ENCODE measurements at regions of chr4 and their contacts with region 1.

Region 1: DNA sequence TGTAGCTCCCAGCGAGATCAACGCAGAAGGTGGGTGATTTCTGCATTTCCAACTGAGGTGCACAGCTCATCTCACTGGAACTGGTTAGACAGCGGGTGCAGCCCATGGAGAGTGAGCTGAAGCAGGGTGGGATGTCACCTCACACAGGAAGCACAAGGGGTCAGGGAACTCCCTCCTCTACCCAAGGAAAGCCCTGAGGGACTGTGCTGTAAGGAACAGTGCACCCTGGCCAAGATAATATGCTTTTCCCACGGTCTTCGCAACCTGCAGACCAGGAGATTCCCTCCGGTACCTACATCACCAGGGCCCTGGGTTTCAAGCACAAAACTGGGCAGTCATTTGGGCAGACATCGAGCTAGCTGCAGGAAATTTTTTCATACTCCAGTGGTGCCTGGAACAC is 216.4 kb upstream of the TET2 start:
- DNase-seq: no peak
- H3K4me3 ChIP-seq: no peak overlapping the region
- H3K27ac ChIP-seq: no peak overlapping the region
- H3K4me1 ChIP-seq: no peaks in the 10 kb centered on the region
- H3K27me3 ChIP-seq: no peaks in the 10 kb centered on the region
- CTCF ChIP-seq: no peak

Region 2: DNA sequence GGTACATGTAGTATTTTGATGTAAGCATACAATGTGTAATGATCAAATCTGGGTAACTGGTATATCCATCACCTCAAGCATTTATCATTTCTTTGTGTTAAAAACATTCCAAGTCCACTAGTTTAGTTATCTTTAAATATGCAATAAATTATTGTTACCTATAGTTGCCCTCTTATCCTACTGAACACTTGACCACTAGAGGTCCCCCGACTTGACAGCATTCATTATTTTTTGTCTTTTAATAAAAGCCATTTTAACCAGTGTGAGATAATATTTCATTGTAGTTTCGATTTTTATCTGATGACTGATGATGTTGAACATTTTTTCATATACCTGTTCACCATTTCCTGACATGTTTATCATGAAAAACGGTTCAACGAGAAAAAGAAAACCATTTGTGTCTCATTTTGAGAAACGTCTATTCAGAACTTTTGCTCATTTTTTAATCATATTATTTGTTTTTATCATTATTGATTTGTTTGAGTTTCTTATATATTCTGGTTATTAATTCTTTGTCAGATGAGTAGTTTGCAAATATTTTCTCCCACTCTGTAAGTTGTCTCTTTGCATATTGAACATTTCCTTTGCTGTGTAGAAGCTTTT is 236.6 kb before region 1 on chr4:
- CTCF ChIA-PET with region 1: no interaction called
- dilution Hi-C with region 1: no loop called
- in situ Hi-C with region 1: no loop called
- intact Hi-C with region 1: no loop called
- DNase-seq: peak; percentile 21
- H3K4me3 ChIP-seq: no peak overlapping the region
- H3K27ac ChIP-seq: no peak overlapping the region
- H3K4me1 ChIP-seq: no peaks in the 10 kb centered on the region
- H3K27me3 ChIP-seq: no peaks in the 10 kb centered on the region
- CTCF ChIP-seq: peak; percentile 52 to 69

Region 3: GRCh38 chr4:105153749-105154148 is 223.5 kb after region 1 on chr4:
- CTCF ChIA-PET with region 1: no interaction called
- dilution Hi-C with region 1: no loop called
- in situ Hi-C with region 1: no loop called
- intact Hi-C with region 1: no loop called
- DNase-seq: no peak
- H3K4me3 ChIP-seq: no peak overlapping the region
- H3K27ac ChIP-seq: no peak overlapping the region
- H3K4me1 ChIP-seq: peaks cover 15% of the 10 kb centered on the region
- H3K27me3 ChIP-seq: no peaks in the 10 kb centered on the region
- CTCF ChIP-seq: no peak

Region 4: GRCh38 chr4:105257826-105258495 is 327.7 kb after region 1 on chr4:
- CTCF ChIA-PET with region 1: no interaction called
- dilution Hi-C with region 1: no loop called
- in situ Hi-C with region 1: no loop called
- intact Hi-C with region 1: loop called (anchors 10 kb)
- DNase-seq: no peak
- H3K4me3 ChIP-seq: no peak overlapping the region
- H3K27ac ChIP-seq: no peak overlapping the region
- H3K4me1 ChIP-seq: no peaks in the 10 kb centered on the region
- H3K27me3 ChIP-seq: no peaks in the 10 kb centered on the region
- CTCF ChIP-seq: peak; percentile 6 to 40